Adrenal gland (tissue), 19 donors: ENCODE measurements at regions of chr2 and their contacts with region 1.

Region 1: DNA sequence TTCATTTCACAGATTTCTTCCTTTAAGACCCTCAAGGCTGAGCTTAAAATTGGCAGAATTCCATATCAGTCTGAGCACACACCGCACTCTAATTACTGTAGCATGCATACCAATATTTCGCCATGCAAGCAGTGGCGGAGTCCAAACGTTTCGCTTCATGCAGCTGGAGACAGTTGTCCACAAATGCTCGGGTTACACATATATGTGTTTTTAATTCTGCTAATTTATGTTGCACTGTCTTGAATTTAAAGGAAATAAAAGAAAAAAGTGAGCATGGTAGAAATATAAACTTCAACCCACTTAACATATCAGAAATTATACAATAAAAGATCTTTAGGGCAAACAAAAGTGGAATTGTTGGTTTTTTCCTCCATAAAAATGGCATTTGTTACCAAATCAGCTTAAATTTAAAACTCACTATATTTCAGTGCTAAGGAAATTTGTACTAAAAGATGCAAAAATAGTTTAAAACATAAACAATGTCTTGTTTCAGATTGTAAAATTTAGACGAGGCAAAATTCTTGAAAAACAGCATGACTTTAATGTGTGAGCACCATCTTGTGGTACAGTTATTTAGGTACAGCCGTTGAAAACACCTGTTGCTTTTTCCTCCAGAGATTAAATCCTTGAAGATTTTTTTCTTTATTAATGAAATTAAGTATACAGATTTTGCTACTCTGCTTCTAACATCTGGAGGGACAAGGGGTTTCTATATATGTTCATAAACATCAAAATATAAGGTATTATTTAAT is 24.1 kb upstream of the KANSL1L start:
- DNase-seq: peak in 4 of 7 donors; percentile 28 to 58 (median 36)
- H3K4me3 ChIP-seq: peak overlapping the region in 1 of 4 donors; percentile 54
- H3K27ac ChIP-seq: no peak overlapping the region
- H3K4me1 ChIP-seq: peaks cover 0 to 8% of the 10 kb centered on the region in 2 donors
- H3K27me3 ChIP-seq: no peaks in the 10 kb centered on the region
- CTCF ChIP-seq: peak; percentile 52 to 86 (median 76)
- POLR2A ChIP-seq: no peak

Region 2: DNA sequence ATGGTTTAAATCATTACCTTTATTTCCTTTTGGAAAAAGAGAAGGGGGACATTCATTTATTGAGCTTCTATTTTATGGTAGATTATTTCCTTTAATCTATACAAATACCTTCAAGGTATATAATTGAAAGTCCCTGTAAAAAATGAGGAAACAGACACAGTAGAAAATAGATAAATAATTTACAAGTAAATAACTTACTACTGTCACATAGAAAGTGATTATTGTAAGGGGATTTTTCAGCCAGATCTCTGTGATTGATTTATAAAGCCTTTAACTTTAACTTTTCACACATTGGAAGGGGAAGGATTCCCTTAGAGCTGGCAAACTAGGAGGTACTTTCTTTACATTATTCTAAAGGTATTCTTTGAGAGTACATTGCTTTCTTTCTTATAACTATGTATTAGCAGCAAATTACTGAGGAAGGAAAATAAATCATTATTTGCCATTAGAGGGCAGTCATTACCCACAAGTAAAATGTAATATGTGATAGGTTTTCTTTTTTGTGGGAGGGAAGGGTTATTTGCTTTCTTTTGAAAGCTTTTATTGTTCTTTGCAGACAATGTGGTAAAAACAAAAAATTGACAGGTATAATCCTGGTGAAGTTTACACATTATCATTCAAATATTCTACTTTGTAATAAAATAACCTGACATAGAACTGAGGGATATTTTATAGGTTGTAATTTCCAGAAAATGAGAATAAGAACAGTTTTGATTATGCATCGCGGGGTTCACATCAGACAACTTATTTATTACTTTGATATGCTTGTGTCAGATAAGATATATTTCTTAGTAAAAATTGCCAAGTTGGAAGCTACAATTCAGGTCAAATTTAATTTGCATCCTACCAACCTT is 217.7 kb before region 1 on chr2:
- intact Hi-C with region 1: loop called (anchors 2 to 5 kb)
- DNase-seq: no peak
- H3K4me3 ChIP-seq: no peak overlapping the region
- H3K27ac ChIP-seq: no peak overlapping the region
- H3K4me1 ChIP-seq: no peaks in the 10 kb centered on the region
- H3K27me3 ChIP-seq: no peaks in the 10 kb centered on the region
- CTCF ChIP-seq: peak; percentile 26 to 84 (median 70)
- POLR2A ChIP-seq: no peak

Region 3: DNA sequence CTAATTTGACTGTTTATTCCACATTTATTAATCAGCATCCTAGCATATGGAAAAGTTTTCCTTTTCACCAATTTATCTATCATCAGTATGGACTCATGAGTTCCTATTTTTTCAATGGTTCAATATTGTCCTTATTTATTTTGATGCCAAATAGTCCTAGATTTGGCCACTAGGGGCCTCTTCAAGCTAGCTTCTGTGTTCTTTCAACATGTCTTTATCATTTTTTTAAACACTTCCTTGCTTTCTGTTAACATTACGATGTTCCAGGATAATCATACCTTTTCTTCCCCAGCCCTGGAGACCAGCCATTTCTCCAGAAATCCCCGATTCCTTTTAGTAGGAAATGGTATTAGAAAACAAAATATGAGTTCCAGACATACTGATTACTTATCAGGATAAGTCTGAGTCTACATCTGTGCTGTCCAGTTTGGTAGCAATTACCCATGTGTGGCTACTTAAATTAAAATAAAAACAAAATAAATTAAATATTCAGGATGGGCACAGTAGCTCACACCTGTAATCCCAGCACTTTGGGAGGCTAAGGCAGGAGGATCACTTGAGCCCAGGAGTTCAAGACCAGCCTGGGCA is 122.3 kb before region 1 on chr2:
- intact Hi-C with region 1: loop called (anchors 2 to 10 kb)
- DNase-seq: peak in 3 of 7 donors; percentile 12 to 40 (median 22)
- H3K4me3 ChIP-seq: no peak overlapping the region
- H3K27ac ChIP-seq: no peak overlapping the region
- H3K4me1 ChIP-seq: peaks cover 0 to 4% of the 10 kb centered on the region in 2 donors
- H3K27me3 ChIP-seq: no peaks in the 10 kb centered on the region
- CTCF ChIP-seq: peak; percentile 49 to 77 (median 64)
- POLR2A ChIP-seq: no peak

Region 4: GRCh38 chr2:210399440-210400041 is 204.3 kb after region 1 on chr2:
- intact Hi-C with region 1: no loop called
- DNase-seq: no peak
- H3K4me3 ChIP-seq: no peak overlapping the region
- H3K27ac ChIP-seq: no peak overlapping the region
- H3K4me1 ChIP-seq: no peaks in the 10 kb centered on the region
- H3K27me3 ChIP-seq: peaks cover 3% of the 10 kb centered on the region
- CTCF ChIP-seq: peak; percentile 13 to 50 (median 36)
- POLR2A ChIP-seq: no peak

Region 5: GRCh38 chr2:210527286-210527685 is 332.0 kb after region 1 on chr2:
- intact Hi-C with region 1: no loop called
- DNase-seq: no peak
- H3K4me3 ChIP-seq: no peak overlapping the region
- H3K27ac ChIP-seq: no peak overlapping the region
- H3K4me1 ChIP-seq: no peaks in the 10 kb centered on the region
- H3K27me3 ChIP-seq: no peaks in the 10 kb centered on the region
- CTCF ChIP-seq: no peak
- POLR2A ChIP-seq: no peak